ENCODE measurements at regions of chr4 and their contacts with region 1.

Region 1: DNA sequence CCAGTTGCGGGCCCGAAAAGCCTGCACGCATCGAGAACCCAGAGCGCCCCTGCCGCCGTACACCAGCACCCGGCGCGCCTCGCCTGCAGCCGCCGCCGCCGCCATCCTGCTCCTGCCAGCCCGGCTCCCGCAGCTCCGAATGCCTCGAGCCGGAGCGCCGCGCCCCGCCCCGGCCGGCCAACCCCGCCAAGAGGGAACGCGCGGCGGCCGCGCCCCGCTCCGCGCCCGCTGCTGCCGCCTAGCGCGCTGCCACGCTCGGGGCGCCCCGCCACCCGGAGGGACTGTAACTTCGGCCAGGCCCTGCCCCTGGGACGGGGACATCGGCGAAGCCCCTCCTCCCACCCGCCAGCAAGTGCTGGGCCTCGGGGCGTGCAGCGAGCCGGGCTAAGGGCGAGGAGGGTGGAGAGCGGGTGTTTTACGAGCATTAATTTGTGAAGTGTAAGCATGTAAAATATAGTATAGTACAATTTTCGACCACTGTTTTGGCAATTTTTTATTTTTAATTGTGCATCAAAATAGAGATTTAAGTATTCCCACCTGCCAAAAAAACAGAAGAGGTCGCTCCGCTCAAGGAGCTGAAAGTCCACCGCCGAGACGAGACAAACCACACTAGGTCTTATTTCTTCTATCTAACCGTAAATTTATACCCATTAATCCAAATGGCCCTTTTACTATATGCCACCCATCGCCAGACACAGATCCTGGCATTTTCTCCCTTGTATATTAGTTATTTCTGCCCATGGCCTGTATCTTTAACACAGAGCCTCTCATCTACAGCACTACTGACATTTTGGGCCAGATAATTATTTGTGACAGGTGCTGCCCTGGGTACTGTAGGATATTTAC is at the start of gene QDPR:
- DNase-seq: peak; percentile 84 to 93 (median 88)
- ATAC-seq: peak; percentile 89 to 97 (median 96)
- H3K4me3 ChIP-seq: peak within 1 kb of the TSS; percentile 69 to 92 (median 82)
- H3K27ac ChIP-seq: peak within 1 kb of the TSS; percentile 9 to 84 (median 78)
- H3K4me1 ChIP-seq: peaks cover 0 to 21% (median 18%) of the 10 kb centered on the region in 12 donors
- H3K27me3 ChIP-seq: peaks cover 0 to 2% (median 0%) of the 10 kb centered on the region in 9 donors
- CTCF ChIP-seq: peak in 10 of 12 donors; percentile 20 to 76 (median 48)
- POLR2A ChIP-seq: no peak
- total RNA-seq, gene QDPR: 22.7 to 66.2 (median 42.5) TPM

Region 2: GRCh38 chr4:17155486-17155885 is 356.7 kb before region 1 on chr4:
- intact Hi-C with region 1: no loop called
- DNase-seq: no peak
- ATAC-seq: no peak
- H3K4me3 ChIP-seq: no peak overlapping the region
- H3K27ac ChIP-seq: no peak overlapping the region
- H3K4me1 ChIP-seq: peaks cover 0 to 3% (median 0%) of the 10 kb centered on the region in 12 donors
- H3K27me3 ChIP-seq: no peaks in the 10 kb centered on the region
- CTCF ChIP-seq: no peak
- POLR2A ChIP-seq: no peak

Region 3: DNA sequence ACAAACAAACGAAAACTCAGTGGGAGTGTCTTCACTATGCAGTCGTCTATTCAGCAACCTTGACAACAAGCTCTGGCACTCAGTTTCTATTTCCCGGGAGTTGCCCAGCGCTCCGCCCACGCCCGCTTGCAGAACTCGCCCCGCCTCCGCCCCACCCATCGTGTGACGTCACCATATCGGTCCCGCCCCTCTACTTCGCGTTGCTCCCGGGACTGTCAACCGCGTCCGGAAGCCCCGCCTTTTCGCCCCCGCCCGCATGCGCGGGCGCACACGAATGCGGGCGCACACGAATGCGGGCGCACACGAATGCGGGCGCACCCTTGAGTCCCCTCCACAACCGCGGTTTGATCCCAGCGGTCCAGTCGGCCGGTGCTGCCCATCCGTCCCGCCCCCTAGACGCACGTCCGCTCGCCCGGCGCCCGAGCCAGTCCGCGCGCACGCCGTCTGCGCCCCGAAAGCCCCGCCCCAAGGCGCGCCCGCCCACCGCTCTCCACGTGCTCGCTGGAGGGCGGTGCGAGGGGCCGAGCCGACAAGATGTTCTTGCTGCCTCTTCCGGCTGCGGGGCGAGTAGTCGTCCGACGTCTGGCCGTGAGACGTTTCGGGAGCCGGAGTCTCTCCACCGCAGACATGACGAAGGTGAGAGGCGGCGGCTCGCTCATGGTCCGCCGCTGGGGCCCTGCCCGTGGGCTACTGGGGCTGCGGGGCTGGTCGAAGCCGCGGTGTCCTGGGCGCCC is 64.9 kb after region 1 on chr4 and contains the start of gene LAP3:
- intact Hi-C with region 1: loop called in 2 of 10 experiments (anchors 5 kb)
- DNase-seq: peak; percentile 97 to 99 (median 98)
- ATAC-seq: peak; percentile 93 to 99 (median 96)
- H3K4me3 ChIP-seq: peak within 1 kb of the TSS; percentile 47 to 96 (median 82)
- H3K27ac ChIP-seq: peak within 1 kb of the TSS; percentile 89 to 96 (median 94)
- H3K4me1 ChIP-seq: peaks cover 0 to 46% (median 34%) of the 10 kb centered on the region in 12 donors
- H3K27me3 ChIP-seq: no peaks in the 10 kb centered on the region
- CTCF ChIP-seq: peak in 1 of 12 donors; percentile 14
- POLR2A ChIP-seq: peak; percentile 21 to 94
- total RNA-seq, gene LAP3: 52.7 to 281 (median 66.1) TPM

Region 4: GRCh38 chr4:17664755-17665154 is 152.6 kb after region 1 on chr4:
- intact Hi-C with region 1: no loop called
- DNase-seq: no peak
- ATAC-seq: peak in 1 of 4 donors; percentile 28
- H3K4me3 ChIP-seq: no peak overlapping the region
- H3K27ac ChIP-seq: no peak overlapping the region
- H3K4me1 ChIP-seq: peaks cover 0 to 12% (median 0%) of the 10 kb centered on the region in 12 donors
- H3K27me3 ChIP-seq: no peaks in the 10 kb centered on the region
- CTCF ChIP-seq: no peak
- POLR2A ChIP-seq: no peak

Measured in heart left ventricle (tissue), 16 donors.